OCI-LY7 (cell line): ENCODE measurements at regions of chr12 and their contacts with region 1.

Region 1: GRCh38 chr12:94207849-94208621 is 59.7 kb downstream of the PLXNC1 start:
- DNase-seq: peak; percentile 83
- H3K4me3 ChIP-seq: peak overlapping the region; percentile 64
- H3K27ac ChIP-seq: peak overlapping the region; percentile 96
- H3K4me1 ChIP-seq: peaks cover 69% of the 10 kb centered on the region
- CTCF ChIP-seq: no peak

Region 2: DNA sequence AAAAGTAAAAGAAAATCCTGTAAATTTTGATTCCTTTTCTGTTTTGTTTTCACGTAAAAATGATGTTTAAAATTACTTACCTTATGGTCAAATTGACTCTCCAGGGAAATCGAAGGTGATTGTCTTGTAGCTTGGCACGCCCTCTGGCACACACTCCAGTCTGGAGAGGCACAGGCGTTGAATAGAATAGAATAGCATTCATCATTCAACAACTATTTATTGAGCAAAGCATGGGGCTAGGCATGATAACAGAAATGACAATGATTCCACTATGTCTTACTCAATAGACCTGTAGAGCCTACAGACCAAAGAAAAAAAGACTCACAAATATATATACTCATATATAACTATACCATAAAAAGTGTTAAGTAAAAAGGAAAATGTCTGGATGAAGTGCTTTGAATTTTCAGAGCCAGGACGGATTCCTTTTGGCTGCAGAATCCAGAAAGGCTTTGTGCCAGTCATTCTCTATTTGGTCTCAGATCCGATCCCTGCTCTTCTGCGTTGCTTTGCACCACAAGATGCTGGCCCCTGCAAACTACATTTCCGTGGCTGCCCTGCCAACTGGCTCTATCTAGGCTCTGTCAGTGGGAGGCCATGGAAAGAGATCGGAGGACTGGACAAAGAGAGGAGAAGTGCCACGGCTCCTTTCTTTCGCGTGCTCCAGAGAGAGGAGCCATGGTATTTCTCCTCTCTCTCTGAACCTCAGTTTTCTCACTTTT is 299.0 kb before region 1 on chr12:
- CTCF ChIA-PET with region 1: no interaction called
- POLR2A ChIA-PET with region 1: no interaction called
- intact Hi-C with region 1: no loop called
- DNase-seq: no peak
- H3K4me3 ChIP-seq: no peak overlapping the region
- H3K27ac ChIP-seq: no peak overlapping the region
- H3K4me1 ChIP-seq: no peaks in the 10 kb centered on the region
- CTCF ChIP-seq: no peak

Region 3: DNA sequence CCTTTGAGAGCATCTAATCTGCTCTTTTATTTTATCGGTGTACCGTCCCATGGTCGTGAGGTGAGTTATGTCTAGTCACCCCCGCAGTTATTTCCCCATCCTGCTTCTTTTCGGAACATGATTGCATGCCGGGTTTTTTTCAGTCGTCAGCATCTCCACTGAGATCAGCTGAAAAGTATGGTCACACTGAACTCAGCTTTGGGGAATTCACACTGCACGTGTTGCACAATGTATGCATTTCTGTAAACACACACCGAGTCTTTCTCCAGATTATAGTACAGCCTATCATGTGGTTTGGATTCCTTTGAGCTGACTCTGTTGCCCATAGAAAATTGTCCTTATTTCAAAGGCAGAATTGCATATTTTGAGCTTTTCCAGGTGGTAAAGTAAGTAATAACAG is 35.1 kb before region 1 on chr12:
- CTCF ChIA-PET with region 1: interaction called, 5 read pairs
- POLR2A ChIA-PET with region 1: interaction called, 30 read pairs
- intact Hi-C with region 1: no loop called
- DNase-seq: no peak
- H3K4me3 ChIP-seq: peak overlapping the region; percentile 44
- H3K27ac ChIP-seq: no peak overlapping the region
- H3K4me1 ChIP-seq: peaks cover 40% of the 10 kb centered on the region
- CTCF ChIP-seq: no peak

Region 4: DNA sequence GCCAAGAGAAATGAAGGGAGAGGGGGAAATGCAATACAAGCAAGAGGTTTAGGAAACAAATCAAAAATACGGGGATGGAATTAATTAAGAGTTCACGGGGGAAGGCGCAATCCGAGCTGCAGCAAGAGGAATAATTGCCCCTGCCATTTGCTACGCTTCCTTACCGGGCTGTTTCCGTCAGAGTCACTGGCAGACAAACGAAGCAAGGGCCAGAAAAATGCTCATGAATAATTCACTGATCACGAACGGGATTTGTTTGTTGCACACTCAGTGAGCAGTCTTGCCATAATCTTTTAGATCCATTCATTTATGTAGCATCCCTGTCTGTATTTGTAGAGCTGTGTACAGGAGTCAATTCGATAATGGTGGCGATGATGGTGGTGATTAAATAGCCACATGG is 20.7 kb before region 1 on chr12:
- CTCF ChIA-PET with region 1: interaction called, 3 read pairs
- POLR2A ChIA-PET with region 1: interaction called, 17 read pairs
- intact Hi-C with region 1: no loop called
- DNase-seq: no peak
- H3K4me3 ChIP-seq: no peak overlapping the region
- H3K27ac ChIP-seq: no peak overlapping the region
- H3K4me1 ChIP-seq: no peaks in the 10 kb centered on the region
- CTCF ChIP-seq: no peak

Region 5: DNA sequence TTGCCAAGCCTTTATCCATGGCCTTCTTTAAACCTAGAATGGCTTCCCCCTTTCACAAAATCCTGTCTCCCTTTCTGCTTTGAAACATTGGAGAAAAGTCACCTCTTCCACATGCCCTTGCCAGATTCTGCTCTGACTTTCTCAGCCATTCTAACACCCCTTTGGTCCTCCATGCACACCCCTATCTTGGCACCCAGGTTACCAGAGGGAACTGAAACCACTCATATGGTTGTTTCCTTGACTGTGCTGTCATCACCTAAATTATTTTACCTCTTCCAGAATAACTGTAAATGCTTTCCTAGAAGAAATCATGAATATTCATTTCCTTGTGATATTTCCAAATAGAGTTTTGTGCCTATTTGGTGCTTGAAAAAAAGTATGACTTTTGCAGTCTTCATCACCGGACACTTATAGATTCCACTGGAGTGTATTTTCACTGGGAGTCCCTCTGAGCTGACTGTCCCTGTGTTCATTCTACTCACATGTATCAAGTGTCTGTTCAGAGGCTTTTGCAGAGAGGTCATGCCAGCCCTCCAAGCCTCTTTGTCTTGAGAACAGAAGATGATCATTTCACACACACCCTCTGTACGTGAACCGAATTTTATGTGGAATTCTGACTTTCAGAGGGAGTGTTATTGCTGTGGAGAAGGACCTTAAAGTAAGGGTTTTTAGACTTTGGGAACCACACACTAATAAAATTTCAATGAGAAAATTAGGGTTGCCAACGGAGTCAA is 14.5 kb after region 1 on chr12:
- CTCF ChIA-PET with region 1: interaction called, 4 read pairs
- POLR2A ChIA-PET with region 1: interaction called, 68 read pairs
- intact Hi-C with region 1: no loop called
- DNase-seq: peak; percentile 34
- H3K4me3 ChIP-seq: no peak overlapping the region
- H3K27ac ChIP-seq: no peak overlapping the region
- H3K4me1 ChIP-seq: peaks cover 22% of the 10 kb centered on the region
- CTCF ChIP-seq: no peak

Region 6: GRCh38 chr12:94244165-94245133 is 36.4 kb after region 1 on chr12:
- CTCF ChIA-PET with region 1: no interaction called
- POLR2A ChIA-PET with region 1: interaction called, 8 read pairs
- intact Hi-C with region 1: loop called (anchors 1 kb)
- DNase-seq: peak; percentile 51
- H3K4me3 ChIP-seq: no peak overlapping the region
- H3K27ac ChIP-seq: no peak overlapping the region
- H3K4me1 ChIP-seq: peaks cover 52% of the 10 kb centered on the region
- CTCF ChIP-seq: no peak